Activated T-helper 2 cell treated with anti-CD3 and anti-CD28 coated beads, Interferon-gamma antibody, Interleukin-2, Interleukin-4, amounts not matched to agents 10 μg/mL and 5 μg/mL and 100 μg/mL, durations not matched to agents 14 hours and 24 hours and 36 hours (primary cell): ENCODE measurements at regions of chr7 and their contacts with region 1.

Region 1: DNA sequence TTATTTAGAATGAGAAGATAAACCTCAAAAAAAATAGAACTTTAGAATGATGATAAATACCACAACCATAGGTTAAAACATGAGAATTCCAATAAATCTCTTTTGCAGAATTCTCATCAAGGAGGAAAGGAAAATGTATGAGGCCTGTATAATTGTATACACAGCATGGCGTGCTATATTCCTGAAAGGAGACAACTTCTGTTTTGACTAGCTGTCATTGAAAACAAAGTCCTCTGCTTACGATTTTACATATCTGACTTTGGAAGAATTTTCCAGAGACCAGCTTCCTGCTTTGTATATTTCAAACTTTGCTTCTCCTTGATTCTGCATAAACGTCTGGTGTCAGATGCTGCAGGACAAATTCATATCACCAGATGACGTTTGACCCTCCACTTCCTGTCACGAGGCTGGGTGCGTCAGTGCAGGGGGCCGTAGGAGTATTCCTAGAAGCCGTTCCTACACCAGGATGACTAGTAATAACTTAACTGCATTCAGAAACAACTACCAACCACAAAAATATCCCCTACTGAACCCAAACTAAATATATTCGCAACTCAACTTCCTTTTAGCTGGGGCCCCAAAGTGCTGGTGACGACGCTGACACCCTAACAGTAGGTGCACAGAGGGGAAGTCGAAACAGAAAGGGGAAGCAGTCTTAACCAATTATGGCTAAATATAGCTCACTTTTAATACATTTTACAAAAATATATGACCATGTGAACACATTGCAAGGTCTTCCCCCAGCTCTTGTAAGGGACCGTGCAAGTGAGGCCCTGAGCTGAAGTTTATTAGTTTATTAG is 178.6 kb upstream of the INHBA start:
- DNase-seq: peak; percentile 76
- H3K4me3 Mint-ChIP-seq: peak overlapping the region; percentile 66
- H3K27ac Mint-ChIP-seq: peak overlapping the region; percentile 94
- H3K4me1 Mint-ChIP-seq: peaks cover 59% of the 10 kb centered on the region
- H3K27me3 Mint-ChIP-seq: no peaks in the 10 kb centered on the region

Region 2: GRCh38 chr7:40700643-40701421 is 1180.7 kb before region 1 on chr7:
- intact Hi-C with region 1: loop called (anchors 10 kb)
- DNase-seq: no peak
- H3K4me3 Mint-ChIP-seq: no peak overlapping the region
- H3K27ac Mint-ChIP-seq: peak overlapping the region; percentile 75
- H3K4me1 Mint-ChIP-seq: peaks cover 21% of the 10 kb centered on the region
- H3K27me3 Mint-ChIP-seq: no peaks in the 10 kb centered on the region

Region 3: DNA sequence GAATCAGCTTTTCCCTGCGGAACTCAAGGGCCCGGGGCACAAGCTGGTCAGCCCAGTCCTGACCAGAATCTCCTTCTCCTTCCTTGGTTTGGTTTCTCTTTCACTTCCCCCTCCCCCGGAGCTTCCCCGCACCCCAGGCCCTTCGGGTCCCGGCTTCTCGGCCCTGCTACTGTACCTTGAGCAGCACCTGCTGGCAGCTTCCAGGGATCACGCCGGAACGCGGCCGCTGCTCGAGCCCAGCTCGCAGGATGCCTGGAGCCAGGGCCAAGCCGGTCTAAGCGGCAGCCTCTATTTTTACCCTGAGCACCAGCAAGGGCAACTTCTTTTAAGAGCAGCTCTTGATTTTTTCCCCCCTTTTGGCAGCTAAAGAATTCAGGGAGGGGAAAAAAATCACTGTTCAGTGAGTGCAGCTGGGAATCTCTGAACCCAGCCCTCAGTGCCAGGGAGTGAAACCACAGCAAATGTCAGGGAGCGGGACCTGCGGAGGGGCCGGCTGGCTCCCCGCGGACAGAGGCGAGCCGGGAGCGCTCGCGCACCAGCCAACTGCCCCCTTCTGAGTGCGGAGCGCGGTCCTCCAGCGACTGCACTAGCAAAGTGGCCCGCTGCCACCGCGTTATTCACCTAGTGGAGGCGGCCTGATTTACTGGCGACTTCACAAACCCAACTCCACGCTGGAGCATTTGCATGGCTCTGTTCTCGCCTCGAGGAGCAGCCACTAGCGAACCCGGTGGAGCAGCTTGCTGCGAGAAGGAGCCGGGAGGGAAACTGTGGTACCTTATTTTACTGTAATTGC is 176.2 kb before region 1 on chr7:
- intact Hi-C with region 1: loop called (anchors 5 kb)
- DNase-seq: peak; percentile 46
- H3K4me3 Mint-ChIP-seq: peak overlapping the region; percentile 74
- H3K27ac Mint-ChIP-seq: no peak overlapping the region
- H3K4me1 Mint-ChIP-seq: peaks cover 17% of the 10 kb centered on the region
- H3K27me3 Mint-ChIP-seq: peaks cover 45% of the 10 kb centered on the region

Region 4: DNA sequence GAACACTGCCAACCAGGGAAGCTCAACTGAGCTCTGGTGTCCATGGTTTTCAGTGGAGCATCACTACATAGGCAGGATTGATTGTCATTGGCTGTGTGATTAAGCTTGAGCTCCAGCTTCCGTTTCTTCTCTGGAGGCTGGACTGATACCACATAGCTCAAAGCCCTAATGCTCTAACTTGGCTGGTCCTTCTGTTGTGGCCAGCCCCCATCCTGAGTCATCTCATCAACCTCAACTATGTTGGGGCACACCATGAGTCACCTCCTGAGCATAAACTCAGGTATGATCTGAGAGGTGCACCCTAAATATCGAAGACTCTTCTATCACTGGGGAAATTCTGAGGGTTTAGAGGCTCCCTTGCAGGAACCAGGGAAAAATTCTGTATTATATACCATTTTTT is 64.1 kb before region 1 on chr7:
- intact Hi-C with region 1: loop called (anchors 2 kb)
- DNase-seq: no peak
- H3K4me3 Mint-ChIP-seq: no peak overlapping the region
- H3K27ac Mint-ChIP-seq: no peak overlapping the region
- H3K4me1 Mint-ChIP-seq: peaks cover 42% of the 10 kb centered on the region
- H3K27me3 Mint-ChIP-seq: peaks cover 18% of the 10 kb centered on the region

Region 5: GRCh38 chr7:41861642-41862041 is 19.9 kb before region 1 on chr7:
- intact Hi-C with region 1: loop called (anchors 2 kb)
- DNase-seq: no peak
- H3K4me3 Mint-ChIP-seq: no peak overlapping the region
- H3K27ac Mint-ChIP-seq: no peak overlapping the region
- H3K4me1 Mint-ChIP-seq: peaks cover 10% of the 10 kb centered on the region
- H3K27me3 Mint-ChIP-seq: peaks cover 3% of the 10 kb centered on the region

Region 6: DNA sequence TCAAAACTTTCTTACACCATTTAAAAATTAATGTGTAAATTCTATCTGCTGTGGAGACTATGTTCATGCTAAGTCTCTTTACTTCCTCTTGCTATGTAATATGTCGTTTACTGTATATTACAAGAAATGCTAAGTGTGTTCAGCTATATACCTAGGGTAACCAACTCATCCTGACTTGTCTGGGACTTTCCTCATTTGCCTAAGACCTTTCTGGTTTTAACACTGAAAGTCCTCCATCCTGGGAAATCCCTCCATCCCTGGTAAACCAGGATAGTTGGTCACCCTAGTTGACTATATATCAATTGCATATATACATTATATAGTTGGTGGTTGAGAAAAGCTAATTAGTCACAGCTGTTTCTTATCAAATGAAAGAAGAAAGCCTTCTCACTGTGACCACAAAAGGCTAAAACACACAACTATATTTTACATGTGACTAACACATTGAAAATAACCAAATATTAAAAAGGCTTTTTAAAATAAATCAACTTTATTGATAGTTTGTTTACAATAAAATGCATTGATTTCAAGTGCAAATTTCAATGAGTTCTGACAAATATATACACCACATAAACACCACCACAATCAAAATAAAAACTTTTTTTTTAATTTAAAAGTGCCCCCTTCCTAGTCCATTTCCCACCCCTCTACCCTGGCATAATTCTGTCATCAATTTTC is 10.9 kb before region 1 on chr7:
- intact Hi-C with region 1: loop called (anchors 1 kb)
- DNase-seq: no peak
- H3K4me3 Mint-ChIP-seq: no peak overlapping the region
- H3K27ac Mint-ChIP-seq: peak overlapping the region; percentile 74
- H3K4me1 Mint-ChIP-seq: peaks cover 58% of the 10 kb centered on the region
- H3K27me3 Mint-ChIP-seq: no peaks in the 10 kb centered on the region

Region 7: GRCh38 chr7:42198974-42199668 is 317.6 kb after region 1 on chr7:
- intact Hi-C with region 1: no loop called
- DNase-seq: no peak
- H3K4me3 Mint-ChIP-seq: no peak overlapping the region
- H3K27ac Mint-ChIP-seq: no peak overlapping the region
- H3K4me1 Mint-ChIP-seq: peaks cover 1% of the 10 kb centered on the region
- H3K27me3 Mint-ChIP-seq: peaks cover 4% of the 10 kb centered on the region